GM12878 (cell line): ENCODE measurements at regions of chr9 and their contacts with region 1.

Region 1: GRCh38 chr9:123863164-123863855 is 66.6 kb downstream of the DENND1A start:
- DNase-seq: no peak
- ATAC-seq: no peak
- H3K4me3 ChIP-seq: no peak overlapping the region
- H3K27ac ChIP-seq: no peak overlapping the region
- H3K4me1 ChIP-seq: peaks cover 20% of the 10 kb centered on the region
- H3K27me3 ChIP-seq: no peaks in the 10 kb centered on the region
- CTCF ChIP-seq: no peak
- EP300 ChIP-seq: no peak
- POLR2A ChIP-seq: no peak
- RAD21 ChIP-seq: no peak

Region 2: GRCh38 chr9:123775289-123776284 is 87.7 kb before region 1 on chr9:
- CTCF ChIA-PET with region 1: interaction called, 3 read pairs
- POLR2A ChIA-PET with region 1: no interaction called
- RAD21 ChIA-PET with region 1: no interaction called
- SMC1A ChIA-PET with region 1: interaction called, 14 read pairs
- in situ Hi-C with region 1: no loop called
- intact Hi-C with region 1: no loop called
- DNase-seq: no peak
- ATAC-seq: peak; percentile 64
- H3K4me3 ChIP-seq: no peak overlapping the region
- H3K27ac ChIP-seq: no peak overlapping the region
- H3K4me1 ChIP-seq: peaks cover 3% of the 10 kb centered on the region
- H3K27me3 ChIP-seq: no peaks in the 10 kb centered on the region
- CTCF ChIP-seq: no peak
- EP300 ChIP-seq: no peak
- POLR2A ChIP-seq: no peak
- RAD21 ChIP-seq: no peak

Region 3: DNA sequence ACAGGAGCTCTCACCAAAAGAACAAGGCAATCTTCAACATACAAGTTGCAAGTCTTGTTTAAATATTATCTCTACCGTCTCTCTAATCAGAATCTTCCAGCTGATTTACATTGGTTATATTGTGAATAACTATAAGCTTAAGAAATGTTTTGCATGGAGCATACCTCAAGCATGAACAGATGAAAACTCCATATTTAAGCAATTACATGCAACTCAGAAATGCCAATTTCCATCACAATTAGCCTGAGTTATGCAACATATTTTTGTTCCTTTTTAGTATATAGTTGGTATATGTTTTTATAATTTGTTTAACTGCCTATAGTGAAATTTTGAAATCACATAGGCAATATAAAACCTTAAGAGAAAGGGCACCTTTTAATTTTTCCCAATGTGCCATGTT is 75.9 kb before region 1 on chr9:
- CTCF ChIA-PET with region 1: no interaction called
- POLR2A ChIA-PET with region 1: no interaction called
- RAD21 ChIA-PET with region 1: no interaction called
- SMC1A ChIA-PET with region 1: no interaction called
- in situ Hi-C with region 1: no loop called
- intact Hi-C with region 1: no loop called
- DNase-seq: no peak
- ATAC-seq: no peak
- H3K4me3 ChIP-seq: no peak overlapping the region
- H3K27ac ChIP-seq: no peak overlapping the region
- H3K4me1 ChIP-seq: no peaks in the 10 kb centered on the region
- H3K27me3 ChIP-seq: no peaks in the 10 kb centered on the region
- CTCF ChIP-seq: no peak
- EP300 ChIP-seq: no peak
- POLR2A ChIP-seq: no peak
- RAD21 ChIP-seq: no peak

Region 4: DNA sequence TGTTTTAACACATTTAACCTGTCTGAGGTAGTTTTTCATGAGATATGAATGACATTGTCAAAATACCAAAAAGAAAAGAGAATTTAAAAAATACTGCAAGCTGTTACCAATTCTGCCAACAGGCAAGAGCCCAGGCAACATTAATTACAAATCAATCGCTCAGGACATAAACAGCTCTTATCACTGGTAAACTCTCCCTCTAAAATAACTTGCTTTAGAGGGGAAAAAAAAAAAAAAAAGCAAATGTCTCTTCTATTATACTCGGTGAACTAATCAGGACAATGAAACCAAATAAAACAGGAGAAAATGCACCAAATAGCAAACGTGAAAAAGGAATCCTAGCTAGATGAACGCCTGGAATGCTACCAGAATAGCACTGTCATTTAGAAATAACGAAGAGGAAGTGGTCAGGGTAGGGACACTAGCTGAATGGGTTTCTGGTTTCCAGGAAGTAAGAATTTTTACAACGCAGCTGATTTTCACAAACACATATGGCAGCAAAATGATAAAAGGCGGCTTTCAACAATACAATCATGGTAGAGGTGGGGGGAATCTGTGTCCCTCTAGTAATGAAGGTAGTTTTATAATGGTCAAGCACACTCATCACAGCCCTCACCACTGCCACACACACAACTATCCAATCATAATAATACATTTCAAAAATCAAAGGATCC is 28.3 kb before region 1 on chr9:
- CTCF ChIA-PET with region 1: no interaction called
- POLR2A ChIA-PET with region 1: interaction called, 3 read pairs
- RAD21 ChIA-PET with region 1: interaction called, 5 read pairs
- SMC1A ChIA-PET with region 1: interaction called, 13 read pairs
- in situ Hi-C with region 1: no loop called
- intact Hi-C with region 1: no loop called
- DNase-seq: peak; percentile 34
- ATAC-seq: peak; percentile 91
- H3K4me3 ChIP-seq: no peak overlapping the region
- H3K27ac ChIP-seq: no peak overlapping the region
- H3K4me1 ChIP-seq: no peaks in the 10 kb centered on the region
- H3K27me3 ChIP-seq: no peaks in the 10 kb centered on the region
- CTCF ChIP-seq: no peak
- EP300 ChIP-seq: peak in 1 of 2 experiments; percentile 65; a peak in 1 of 4 replicates
- POLR2A ChIP-seq: no peak
- RAD21 ChIP-seq: no peak

Region 5: DNA sequence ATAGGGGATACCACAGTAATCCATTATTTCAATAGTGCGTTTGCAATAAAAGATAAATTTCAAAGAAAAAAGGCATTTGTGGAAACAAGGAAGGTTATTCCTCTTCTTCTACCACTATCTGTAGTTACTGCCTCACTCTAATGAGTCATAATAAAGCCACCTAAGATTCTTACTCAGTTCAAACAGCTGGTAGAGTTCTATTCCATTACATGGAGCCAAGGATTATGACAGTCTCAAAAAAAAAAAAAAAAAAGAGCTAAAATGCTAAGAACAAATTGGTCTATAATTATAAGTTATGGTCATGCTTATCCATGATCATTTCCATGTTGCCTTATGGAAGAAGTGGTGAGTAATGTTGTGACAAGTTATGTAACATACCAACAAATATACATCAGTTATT is 20.3 kb after region 1 on chr9:
- CTCF ChIA-PET with region 1: interaction called, 6 read pairs
- POLR2A ChIA-PET with region 1: interaction called, 5 read pairs
- RAD21 ChIA-PET with region 1: no interaction called
- SMC1A ChIA-PET with region 1: interaction called, 12 read pairs
- in situ Hi-C with region 1: no loop called
- intact Hi-C with region 1: no loop called
- DNase-seq: no peak
- ATAC-seq: no peak
- H3K4me3 ChIP-seq: no peak overlapping the region
- H3K27ac ChIP-seq: no peak overlapping the region
- H3K4me1 ChIP-seq: peaks cover 6% of the 10 kb centered on the region
- H3K27me3 ChIP-seq: no peaks in the 10 kb centered on the region
- CTCF ChIP-seq: no peak
- EP300 ChIP-seq: no peak
- POLR2A ChIP-seq: no peak
- RAD21 ChIP-seq: no peak